CD8-positive, alpha-beta T cell (primary cell): ENCODE measurements at regions of chr1 and their contacts with region 1.

Region 1: DNA sequence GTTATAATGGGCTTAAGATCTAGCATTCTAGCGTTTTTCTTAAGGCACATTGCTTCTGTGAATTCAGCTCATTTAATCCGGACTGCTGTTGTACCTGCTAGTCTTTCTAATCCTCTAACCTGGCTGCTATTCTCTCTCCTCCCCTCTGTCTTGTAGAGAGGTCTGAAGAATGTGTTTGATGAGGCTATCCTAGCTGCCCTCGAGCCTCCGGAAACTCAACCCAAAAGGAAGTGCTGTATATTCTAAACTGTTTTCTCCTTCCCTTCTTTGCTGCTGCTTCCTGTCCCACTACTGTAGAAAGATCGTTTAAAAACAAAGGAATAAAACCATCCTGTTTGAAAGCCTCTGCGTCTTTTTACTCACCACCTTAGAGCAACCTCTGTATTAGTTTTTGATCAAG is 37.3 kb downstream of the CDC42 start:
- DNase-seq: peak in 1 of 9 experiments; percentile 33
- ATAC-seq: no peak
- H3K4me3 ChIP-seq: peak overlapping the region in 1 of 2 experiments; percentile 13
- H3K4me3 Mint-ChIP-seq: peak overlapping the region; percentile 71
- H3K27ac ChIP-seq: peak overlapping the region; percentile 6 to 46
- H3K27ac Mint-ChIP-seq: peak overlapping the region; percentile 76
- H3K4me1 ChIP-seq: peaks cover 67% of the 10 kb centered on the region
- H3K4me1 Mint-ChIP-seq: peaks cover 87% of the 10 kb centered on the region
- H3K27me3 ChIP-seq: no peaks in the 10 kb centered on the region
- H3K27me3 Mint-ChIP-seq: no peaks in the 10 kb centered on the region
- CTCF ChIP-seq: no peak

Region 2: GRCh38 chr1:22075718-22076117 is 14.1 kb before region 1 on chr1:
- CTCF ChIA-PET with region 1: interaction called, 4 read pairs
- POLR2A ChIA-PET with region 1: interaction called, 4 read pairs
- intact Hi-C with region 1: loop called in 1 of 2 experiments (anchors 2 kb)
- DNase-seq: no peak
- ATAC-seq: no peak
- H3K4me3 ChIP-seq: no peak overlapping the region
- H3K4me3 Mint-ChIP-seq: peak overlapping the region; percentile 68
- H3K27ac ChIP-seq: peak overlapping the region in 1 of 2 experiments; percentile 41
- H3K27ac Mint-ChIP-seq: peak overlapping the region; percentile 86
- H3K4me1 ChIP-seq: peaks cover 85% of the 10 kb centered on the region
- H3K4me1 Mint-ChIP-seq: peaks cover 86% of the 10 kb centered on the region
- H3K27me3 ChIP-seq: no peaks in the 10 kb centered on the region
- H3K27me3 Mint-ChIP-seq: no peaks in the 10 kb centered on the region
- CTCF ChIP-seq: no peak